Activated T-helper 2 cell treated with anti-CD3 and anti-CD28 coated beads, Interferon-gamma antibody, Interleukin-2, Interleukin-4, amounts not matched to agents 10 μg/mL and 5 μg/mL and 100 μg/mL, durations not matched to agents 14 hours and 24 hours and 36 hours (primary cell): ENCODE measurements at regions of chr10 and their contacts with region 1.

Region 1: GRCh38 chr10:92208736-92209327 is 82.0 kb downstream of the CPEB3 start:
- DNase-seq: no peak
- H3K4me3 Mint-ChIP-seq: no peak overlapping the region
- H3K27ac Mint-ChIP-seq: no peak overlapping the region
- H3K4me1 Mint-ChIP-seq: peaks cover 10% of the 10 kb centered on the region
- H3K27me3 Mint-ChIP-seq: peaks cover 24% of the 10 kb centered on the region

Region 2: DNA sequence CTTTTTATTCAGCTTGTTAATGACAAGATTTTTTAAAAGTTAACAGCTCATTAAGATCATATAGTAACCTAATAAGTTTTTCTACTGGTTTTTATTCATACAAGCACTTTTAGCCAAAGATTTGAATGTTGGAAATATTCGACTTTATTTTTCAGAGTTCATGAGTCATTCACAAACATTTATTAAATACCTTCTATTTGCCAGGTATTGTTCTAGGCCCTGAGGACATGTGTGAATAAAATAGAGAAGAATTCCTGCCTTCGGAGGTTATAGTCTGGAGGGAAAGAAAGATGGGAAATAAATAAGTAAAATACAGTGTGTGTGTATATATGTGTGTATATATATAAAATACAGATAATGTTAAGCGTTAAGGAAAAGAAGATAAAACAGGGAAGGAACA is 253.7 kb before region 1 on chr10:
- intact Hi-C with region 1: loop called (anchors 5 kb)
- DNase-seq: no peak
- H3K4me3 Mint-ChIP-seq: no peak overlapping the region
- H3K27ac Mint-ChIP-seq: no peak overlapping the region
- H3K4me1 Mint-ChIP-seq: peaks cover 2% of the 10 kb centered on the region
- H3K27me3 Mint-ChIP-seq: no peaks in the 10 kb centered on the region

Region 3: DNA sequence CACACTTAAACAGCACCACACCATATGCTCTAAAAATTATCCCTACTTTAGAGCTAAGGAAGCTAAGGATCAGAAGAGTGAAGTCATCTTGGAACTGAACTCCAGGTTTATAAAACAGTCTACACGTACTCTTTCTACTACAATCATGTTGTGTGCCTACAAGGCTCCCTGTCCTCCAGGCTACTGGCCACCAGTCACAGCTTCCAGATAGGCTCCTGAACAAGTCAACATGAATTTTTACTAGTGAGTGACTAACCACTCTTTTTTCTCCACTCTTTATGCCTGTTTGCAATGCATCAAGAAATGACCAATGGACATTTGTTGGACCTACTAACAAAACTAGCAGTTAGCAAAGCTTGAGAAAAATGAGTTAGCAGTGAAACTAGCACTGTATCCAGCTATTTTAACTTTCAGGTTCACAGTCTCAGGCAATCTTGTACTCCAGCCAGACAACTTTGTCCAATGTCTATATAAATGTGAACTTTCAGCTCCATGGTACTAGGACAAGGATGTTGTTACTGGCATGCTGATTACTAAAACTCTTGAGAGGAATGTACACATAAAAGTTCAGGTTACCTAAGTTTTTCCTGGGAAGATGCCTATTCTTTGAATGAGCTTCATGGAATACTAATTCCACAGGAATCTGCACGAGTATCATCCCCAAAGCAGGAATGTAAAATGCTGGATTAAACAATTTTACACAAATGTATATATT is 105.3 kb before region 1 on chr10:
- intact Hi-C with region 1: loop called (anchors 5 kb)
- DNase-seq: no peak
- H3K4me3 Mint-ChIP-seq: no peak overlapping the region
- H3K27ac Mint-ChIP-seq: no peak overlapping the region
- H3K4me1 Mint-ChIP-seq: peaks cover 19% of the 10 kb centered on the region
- H3K27me3 Mint-ChIP-seq: peaks cover 5% of the 10 kb centered on the region

Region 4: DNA sequence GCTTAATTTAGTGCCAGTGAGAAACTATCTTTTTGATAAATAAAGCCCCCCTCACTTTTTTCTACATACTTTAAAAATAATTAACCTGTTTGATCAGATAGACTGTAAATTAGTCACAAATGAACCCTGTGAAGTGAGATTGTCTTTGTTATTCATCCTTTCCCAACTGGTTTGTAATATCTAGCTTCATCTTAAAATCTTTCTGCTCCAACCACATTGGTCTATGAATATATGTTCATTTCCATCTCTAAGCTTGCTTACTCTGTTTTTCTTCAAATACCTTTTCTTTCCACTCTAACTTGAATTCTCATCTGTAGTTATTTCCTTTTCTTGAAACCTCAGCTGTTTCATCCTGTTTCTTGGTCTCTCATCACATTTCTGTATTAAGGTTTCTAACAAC is 94.3 kb after region 1 on chr10:
- intact Hi-C with region 1: loop called (anchors 1 kb)
- DNase-seq: no peak
- H3K4me3 Mint-ChIP-seq: no peak overlapping the region
- H3K27ac Mint-ChIP-seq: peak overlapping the region; percentile 31
- H3K4me1 Mint-ChIP-seq: peaks cover 14% of the 10 kb centered on the region
- H3K27me3 Mint-ChIP-seq: no peaks in the 10 kb centered on the region